ENCODE measurements at regions of chr22 and their contacts with region 1.

Region 1: DNA sequence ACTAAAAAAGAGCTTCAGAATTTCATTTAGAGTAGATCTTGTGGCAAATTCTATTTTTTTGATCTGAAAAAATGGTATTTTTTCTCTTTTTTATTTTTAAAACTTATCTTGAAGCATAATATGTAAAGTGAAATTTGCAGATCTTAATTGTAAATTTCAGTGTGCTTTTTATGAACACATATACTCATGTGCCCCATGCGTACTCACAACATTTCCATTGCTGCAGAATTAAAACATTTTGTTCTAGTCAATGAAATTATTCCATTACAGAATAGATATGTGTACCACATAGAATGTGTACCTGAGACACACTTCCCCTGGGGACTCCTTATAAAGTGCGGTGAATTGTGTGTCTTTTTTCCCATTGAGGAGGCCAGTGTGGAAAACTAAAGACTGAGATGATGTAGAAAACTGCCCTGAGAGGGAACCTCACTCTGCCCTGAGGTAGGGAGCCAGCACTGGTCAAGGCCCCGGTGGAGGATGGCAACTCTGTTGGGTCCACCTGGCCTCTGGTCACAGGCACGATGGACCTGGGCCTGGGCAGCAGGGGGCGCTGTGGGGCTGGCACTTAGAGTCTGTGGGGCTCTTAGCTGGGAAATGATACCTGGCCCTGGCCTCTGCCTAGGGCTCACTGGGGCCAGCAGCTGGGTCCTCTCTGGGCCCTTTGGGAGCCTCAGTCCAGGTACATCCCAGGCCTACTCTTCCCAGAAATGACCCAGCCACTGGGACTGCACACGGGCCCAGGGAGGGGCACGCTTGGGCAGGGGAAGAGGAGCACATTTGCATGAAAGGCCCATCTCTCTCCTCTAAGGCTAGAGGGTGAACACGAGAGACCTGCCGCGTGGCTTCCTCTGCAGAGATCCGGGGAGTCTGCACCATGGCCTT is 77.9 kb upstream of the TOP3B start:
- DNase-seq: peak; percentile 87
- ATAC-seq: peak; percentile 88
- H3K4me3 Mint-ChIP-seq: no peak overlapping the region
- H3K27ac Mint-ChIP-seq: no peak overlapping the region
- H3K4me1 Mint-ChIP-seq: no peaks in the 10 kb centered on the region
- H3K27me3 Mint-ChIP-seq: peaks cover 22% of the 10 kb centered on the region

Region 2: GRCh38 chr22:21766691-21767462 is 293.6 kb before region 1 on chr22:
- CTCF ChIA-PET with region 1: no interaction called
- POLR2A ChIA-PET with region 1: no interaction called
- intact Hi-C with region 1: no loop called
- DNase-seq: peak; percentile 83
- ATAC-seq: peak; percentile 77
- H3K4me3 Mint-ChIP-seq: no peak overlapping the region
- H3K27ac Mint-ChIP-seq: peak overlapping the region; percentile 71
- H3K4me1 Mint-ChIP-seq: peaks cover 65% of the 10 kb centered on the region
- H3K27me3 Mint-ChIP-seq: no peaks in the 10 kb centered on the region

Region 3: GRCh38 chr22:22043296-22044078 is 17.0 kb before region 1 on chr22:
- CTCF ChIA-PET with region 1: interaction called, 13 read pairs
- POLR2A ChIA-PET with region 1: interaction called, 3 read pairs
- intact Hi-C with region 1: no loop called
- DNase-seq: no peak
- ATAC-seq: no peak
- H3K4me3 Mint-ChIP-seq: no peak overlapping the region
- H3K27ac Mint-ChIP-seq: no peak overlapping the region
- H3K4me1 Mint-ChIP-seq: peaks cover 2% of the 10 kb centered on the region
- H3K27me3 Mint-ChIP-seq: peaks cover 7% of the 10 kb centered on the region

Region 4: DNA sequence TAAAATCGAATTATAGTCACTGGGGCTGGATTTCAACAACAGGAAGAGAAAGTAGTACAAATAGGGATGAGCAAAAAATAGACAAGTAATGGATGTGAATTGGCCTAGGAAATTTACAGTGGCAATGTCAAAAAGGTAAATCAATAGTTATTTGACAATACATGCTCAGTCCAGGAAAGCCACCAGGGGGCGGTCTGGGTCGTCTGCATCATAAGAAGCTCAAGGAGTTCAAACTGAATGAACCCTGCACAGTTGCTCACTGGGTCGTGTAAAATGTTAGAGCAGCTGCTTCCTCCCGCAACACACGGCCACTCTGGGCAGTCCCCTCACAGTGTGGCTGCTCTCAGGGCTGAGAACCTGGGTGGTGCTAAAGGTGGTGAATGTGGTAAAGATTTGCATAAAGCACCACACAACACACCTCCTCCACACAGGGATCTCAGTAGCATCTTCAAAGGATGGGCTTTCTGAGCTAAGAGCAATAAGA is 362.2 kb after region 1 on chr22:
- CTCF ChIA-PET with region 1: no interaction called
- POLR2A ChIA-PET with region 1: no interaction called
- intact Hi-C with region 1: no loop called
- DNase-seq: peak; percentile 87
- ATAC-seq: peak; percentile 91
- H3K4me3 Mint-ChIP-seq: no peak overlapping the region
- H3K27ac Mint-ChIP-seq: no peak overlapping the region
- H3K4me1 Mint-ChIP-seq: no peaks in the 10 kb centered on the region
- H3K27me3 Mint-ChIP-seq: peaks cover 20% of the 10 kb centered on the region

Measured in activated CD4-positive, alpha-beta T cell treated with anti-CD3 and anti-CD28 coated beads for 36 hours (primary cell).